ENCODE measurements at regions of chr19 and their contacts with region 1.

Region 1: DNA sequence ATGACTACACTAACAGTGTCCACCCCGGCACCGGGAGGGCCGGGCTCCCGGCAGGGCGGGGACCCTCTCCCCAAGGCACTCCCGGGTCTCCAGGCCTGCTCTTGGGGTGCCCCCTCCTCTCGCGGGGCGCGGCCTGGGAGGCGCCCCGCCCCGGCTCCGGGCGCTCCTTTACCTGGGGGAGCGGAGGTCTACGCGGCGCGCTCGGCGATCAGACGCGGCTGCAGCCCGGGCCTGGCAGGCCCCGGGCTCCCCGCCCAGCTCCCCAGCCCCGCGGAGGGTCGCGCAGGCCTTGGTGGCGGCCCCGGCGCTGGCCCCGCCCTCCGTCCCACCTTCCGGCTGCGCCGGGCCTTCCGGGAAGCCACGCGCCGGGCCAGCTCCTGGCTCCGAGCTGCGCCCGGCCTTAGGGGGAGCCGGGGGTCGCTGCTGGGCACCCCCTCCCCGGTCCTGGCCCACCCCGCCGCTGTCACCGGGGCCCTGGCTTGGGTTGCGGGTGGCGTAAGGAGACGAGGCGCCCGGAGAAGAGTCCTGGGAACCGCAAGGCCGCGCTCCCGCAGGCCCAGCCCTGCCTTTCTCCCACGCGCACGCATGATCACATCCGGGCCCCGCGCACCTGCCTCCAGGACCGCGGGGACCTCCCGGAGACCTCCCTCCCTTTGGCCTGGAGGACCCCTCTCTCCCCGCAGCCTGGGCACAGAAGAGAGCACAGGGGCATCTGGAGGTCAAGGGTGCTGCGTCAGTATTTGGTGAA is at the start of gene C19orf12:
- DNase-seq: peak in 1 of 2 donors; percentile 70
- H3K4me3 ChIP-seq: peak within 1 kb of the TSS; percentile 91 to 97
- H3K27ac ChIP-seq: peak within 1 kb of the TSS; percentile 81 to 95
- H3K4me1 ChIP-seq: peaks cover 9 to 28% of the 10 kb centered on the region in 2 donors
- H3K27me3 ChIP-seq: no peaks in the 10 kb centered on the region
- CTCF ChIP-seq: no peak
- total RNA-seq, gene C19orf12: 37.8 TPM

Region 2: DNA sequence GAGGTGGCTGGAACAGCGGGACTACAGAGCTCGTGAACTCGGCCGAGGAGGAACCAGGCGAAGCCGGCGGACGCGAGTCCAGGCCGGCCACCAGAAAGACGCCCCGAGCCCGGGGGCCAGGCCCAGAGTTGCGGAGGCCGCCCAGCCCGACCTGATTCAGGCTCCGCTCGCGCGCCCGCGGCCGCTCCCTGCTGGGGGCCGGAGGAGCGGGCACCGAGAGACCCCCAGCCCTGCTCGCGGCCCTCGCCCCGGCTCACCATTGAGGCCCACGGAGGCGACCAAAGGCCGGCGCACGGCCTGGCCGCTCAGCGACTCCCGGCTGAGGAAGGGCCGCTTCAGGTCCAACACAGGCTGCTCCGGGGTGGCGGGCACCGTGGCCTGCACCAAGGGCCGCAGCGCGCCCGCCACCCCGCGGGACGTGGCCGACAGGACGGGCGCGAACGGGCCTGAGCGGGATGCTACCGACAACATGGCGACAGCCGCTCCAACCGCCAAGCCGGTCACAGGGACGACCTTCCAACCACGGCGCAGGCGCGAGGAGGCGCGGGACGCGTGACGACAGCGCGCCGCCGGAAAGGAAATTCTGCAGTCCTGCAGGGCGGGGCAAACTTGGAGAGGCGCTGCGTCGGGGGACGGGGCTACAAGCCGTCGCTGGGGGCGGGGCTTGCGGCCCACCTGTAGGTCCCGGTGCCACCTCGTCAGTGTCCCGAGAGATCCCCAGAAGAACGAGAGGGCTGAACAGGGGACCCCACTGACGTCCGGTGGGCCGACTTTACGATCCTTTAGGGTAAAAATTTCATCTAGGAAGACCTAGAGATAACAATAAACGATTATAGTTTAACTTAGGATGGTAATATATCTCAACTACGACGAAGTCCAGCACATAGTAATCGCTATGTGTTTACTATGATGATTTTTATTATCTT is 502.2 kb before region 1 on chr19 and contains the start of gene UQCRFS1:
- intact Hi-C with region 1: loop called (anchors 2 kb)
- DNase-seq: peak; percentile 73 to 96
- H3K4me3 ChIP-seq: peak within 1 kb of the TSS; percentile 70 to 92
- H3K27ac ChIP-seq: peak within 1 kb of the TSS; percentile 86 to 92
- H3K4me1 ChIP-seq: peaks cover 0 to 5% of the 10 kb centered on the region in 2 donors
- H3K27me3 ChIP-seq: no peaks in the 10 kb centered on the region
- CTCF ChIP-seq: no peak
- total RNA-seq, gene UQCRFS1: 21.4 TPM

Region 3: GRCh38 chr19:29665215-29665825 is 49.8 kb before region 1 on chr19 and contains the start of gene PLEKHF1:
- intact Hi-C with region 1: loop called (anchors 1 kb)
- DNase-seq: peak; percentile 72 to 95
- H3K4me3 ChIP-seq: peak within 1 kb of the TSS; percentile 75 to 93
- H3K27ac ChIP-seq: peak within 1 kb of the TSS; percentile 99
- H3K4me1 ChIP-seq: peaks cover 39 to 64% of the 10 kb centered on the region in 2 donors
- H3K27me3 ChIP-seq: no peaks in the 10 kb centered on the region
- CTCF ChIP-seq: no peak
- total RNA-seq, gene PLEKHF1: 68.3 TPM

Region 4: GRCh38 chr19:29680447-29680846 is 34.7 kb before region 1 on chr19:
- intact Hi-C with region 1: no loop called
- DNase-seq: peak in 1 of 2 donors; percentile 77
- H3K4me3 ChIP-seq: no peak overlapping the region
- H3K27ac ChIP-seq: peak overlapping the region; percentile 65 to 84
- H3K4me1 ChIP-seq: peaks cover 18 to 58% of the 10 kb centered on the region in 2 donors
- H3K27me3 ChIP-seq: no peaks in the 10 kb centered on the region
- CTCF ChIP-seq: no peak

Region 5: DNA sequence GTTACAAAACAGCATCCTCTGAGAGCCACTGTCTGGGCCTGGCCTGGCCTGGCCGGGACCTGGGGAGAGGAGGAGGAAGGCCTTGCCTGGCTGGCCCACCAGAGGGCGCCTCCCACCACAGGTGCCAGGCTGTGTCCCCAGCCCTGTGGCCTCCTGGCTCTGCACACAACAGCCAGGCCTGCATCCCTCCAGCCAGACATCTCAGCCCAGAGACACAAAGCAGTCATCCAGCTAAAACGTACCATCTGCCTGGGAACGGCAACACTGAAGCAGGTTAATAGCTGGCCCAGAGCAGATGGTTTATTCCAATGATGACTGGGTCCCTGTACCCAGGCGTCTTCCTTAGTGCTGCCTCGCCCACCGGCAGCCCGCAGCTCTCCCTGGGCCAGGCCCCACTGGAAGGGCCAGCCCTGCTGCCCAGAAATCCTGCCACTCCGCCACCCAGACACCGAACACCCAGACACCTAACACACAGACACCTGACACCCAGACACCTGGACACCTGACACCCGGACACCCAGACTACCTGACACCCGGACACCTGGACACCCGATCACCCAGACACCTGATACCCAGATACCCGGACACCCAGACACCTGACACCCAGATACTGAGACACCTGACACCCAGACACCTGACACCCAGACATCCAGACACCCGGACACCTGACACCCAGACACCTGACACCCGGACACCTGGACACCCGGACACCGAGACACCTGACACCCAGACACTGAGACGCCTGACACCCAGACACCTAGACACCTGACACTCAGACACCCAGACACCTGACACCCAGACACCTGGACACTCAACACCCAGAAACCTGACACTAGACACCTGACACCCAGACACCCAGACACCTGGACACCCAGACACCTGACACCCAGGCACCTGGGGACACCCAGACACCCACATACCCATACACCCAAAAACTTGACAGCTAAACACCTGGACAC is 20.2 kb before region 1 on chr19:
- intact Hi-C with region 1: loop called (anchors 1 kb)
- DNase-seq: peak in 1 of 2 donors; percentile 91
- H3K4me3 ChIP-seq: no peak overlapping the region
- H3K27ac ChIP-seq: peak overlapping the region; percentile 37 to 61
- H3K4me1 ChIP-seq: peaks cover 0 to 9% of the 10 kb centered on the region in 2 donors
- H3K27me3 ChIP-seq: no peaks in the 10 kb centered on the region
- CTCF ChIP-seq: peak; percentile 75 to 93 (median 90)

Region 6: DNA sequence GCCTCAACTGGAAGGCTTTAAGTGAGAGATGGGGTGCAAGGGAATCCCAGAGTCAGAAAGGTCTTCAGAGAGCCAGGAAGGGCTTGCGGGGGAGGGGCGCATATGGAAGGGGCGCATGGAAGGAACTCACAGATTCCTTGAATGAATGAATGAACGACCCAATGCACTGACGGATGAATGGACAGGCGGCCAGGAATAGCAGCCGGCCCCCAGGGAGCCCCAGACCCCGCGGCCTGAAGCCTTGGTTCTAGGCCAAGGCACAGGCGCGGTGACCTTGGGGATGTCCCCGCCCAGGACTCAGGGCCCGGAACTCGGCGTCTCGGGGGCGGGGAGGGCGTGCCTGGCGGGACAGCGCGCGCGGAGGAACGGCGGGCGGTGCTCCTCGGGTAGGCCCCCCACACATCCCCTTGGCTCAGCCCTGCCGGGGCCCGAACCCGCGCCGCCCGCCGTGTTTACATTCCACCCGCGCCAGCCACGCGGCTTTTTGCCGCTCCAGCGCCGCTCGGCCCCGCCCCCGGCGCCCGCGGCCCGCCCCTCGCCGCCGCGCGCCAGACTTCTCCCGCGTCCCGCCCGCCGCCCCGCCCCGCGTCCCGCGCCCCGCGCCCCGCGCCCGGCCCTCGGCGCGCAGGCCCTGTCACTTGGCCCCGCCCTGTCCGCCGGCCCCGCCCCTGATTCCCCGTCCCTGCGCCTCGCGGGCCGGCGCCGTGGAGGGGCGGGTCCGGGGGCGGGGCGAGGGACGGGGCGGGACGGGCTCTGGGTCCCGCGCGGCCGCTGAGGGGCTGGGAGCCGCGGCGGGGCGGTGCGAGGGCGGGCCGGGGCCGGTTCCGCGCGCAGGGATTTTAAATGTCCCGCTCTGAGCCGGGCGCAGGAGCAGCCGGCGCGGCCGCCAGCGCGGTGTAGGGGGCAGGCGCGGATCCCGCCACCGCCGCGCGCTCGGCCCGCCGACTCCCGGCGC is 96.3 kb after region 1 on chr19 and contains the start of gene CCNE1:
- intact Hi-C with region 1: loop called (anchors 5 kb)
- DNase-seq: peak; percentile 55 to 95
- H3K4me3 ChIP-seq: peak within 1 kb of the TSS; percentile 75 to 79
- H3K27ac ChIP-seq: no peak within 1 kb of the TSS
- H3K4me1 ChIP-seq: no peaks in the 10 kb centered on the region
- H3K27me3 ChIP-seq: no peaks in the 10 kb centered on the region
- CTCF ChIP-seq: no peak
- total RNA-seq, gene CCNE1: not detected

Region 7: DNA sequence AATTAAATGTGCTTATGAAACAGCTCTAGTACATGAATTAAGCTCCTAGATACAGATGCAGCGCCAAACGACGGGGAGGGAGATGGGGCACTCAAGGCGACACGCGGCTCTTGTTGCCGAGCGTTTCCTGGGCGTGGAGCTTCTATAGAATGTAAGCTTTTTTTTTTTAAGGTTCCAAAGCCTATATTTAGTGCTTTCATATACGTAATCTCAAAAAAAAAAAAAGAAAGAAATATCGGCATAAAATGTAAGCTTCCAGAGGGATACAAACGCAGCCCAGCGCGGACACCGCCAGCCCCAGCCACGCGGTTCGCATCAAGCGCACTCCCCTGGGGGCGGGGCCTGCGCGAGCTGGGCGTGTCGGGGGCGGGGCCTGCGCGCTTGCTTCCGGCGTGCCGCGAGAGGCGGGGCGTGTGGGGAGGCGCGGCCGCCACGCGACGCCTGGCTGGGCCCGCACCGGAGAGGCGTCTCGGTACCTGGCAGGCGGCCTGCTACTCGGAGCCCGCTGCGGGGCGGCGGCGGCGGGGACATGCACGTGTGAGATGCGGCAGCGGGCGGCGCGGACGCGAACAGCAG is 226.8 kb after region 1 on chr19 and contains the start of gene URI1:
- intact Hi-C with region 1: loop called (anchors 10 kb)
- DNase-seq: peak; percentile 28 to 93
- H3K4me3 ChIP-seq: peak within 1 kb of the TSS; percentile 98 to 99
- H3K27ac ChIP-seq: peak within 1 kb of the TSS; percentile 77 to 78
- H3K4me1 ChIP-seq: peaks cover 0 to 18% of the 10 kb centered on the region in 2 donors
- H3K27me3 ChIP-seq: no peaks in the 10 kb centered on the region
- CTCF ChIP-seq: no peak
- total RNA-seq, gene URI1: 23.8 TPM